Activated CD4-positive, alpha-beta T cell treated with anti-CD3 and anti-CD28 coated beads, Interleukin-2, amount 10 ng/mL, durations not matched to agents 24 days and 14 days (primary cell): ENCODE measurements at regions of chr1 and their contacts with region 1.

Region 1: GRCh38 chr1:47313915-47314664 is at the start of gene STIL:
- DNase-seq: peak; percentile 99
- H3K4me3 Mint-ChIP-seq: peak within 1 kb of the TSS; percentile 91
- H3K27ac Mint-ChIP-seq: peak within 1 kb of the TSS; percentile 86
- H3K4me1 Mint-ChIP-seq: peaks cover 21% of the 10 kb centered on the region
- H3K27me3 Mint-ChIP-seq: no peaks in the 10 kb centered on the region
- total RNA-seq, gene STIL: 25.1 and 28.0 TPM in 2 replicates

Region 2: GRCh38 chr1:47351305-47351704 is 37.2 kb after region 1 on chr1:
- intact Hi-C with region 1: loop called (anchors 1 kb)
- DNase-seq: no peak
- H3K4me3 Mint-ChIP-seq: peak overlapping the region; percentile 3
- H3K27ac Mint-ChIP-seq: peak overlapping the region; percentile 88
- H3K4me1 Mint-ChIP-seq: peaks cover 14% of the 10 kb centered on the region
- H3K27me3 Mint-ChIP-seq: no peaks in the 10 kb centered on the region